Caco-2 (cell line): ENCODE measurements at regions of chr7 and their contacts with region 1.

Region 1: DNA sequence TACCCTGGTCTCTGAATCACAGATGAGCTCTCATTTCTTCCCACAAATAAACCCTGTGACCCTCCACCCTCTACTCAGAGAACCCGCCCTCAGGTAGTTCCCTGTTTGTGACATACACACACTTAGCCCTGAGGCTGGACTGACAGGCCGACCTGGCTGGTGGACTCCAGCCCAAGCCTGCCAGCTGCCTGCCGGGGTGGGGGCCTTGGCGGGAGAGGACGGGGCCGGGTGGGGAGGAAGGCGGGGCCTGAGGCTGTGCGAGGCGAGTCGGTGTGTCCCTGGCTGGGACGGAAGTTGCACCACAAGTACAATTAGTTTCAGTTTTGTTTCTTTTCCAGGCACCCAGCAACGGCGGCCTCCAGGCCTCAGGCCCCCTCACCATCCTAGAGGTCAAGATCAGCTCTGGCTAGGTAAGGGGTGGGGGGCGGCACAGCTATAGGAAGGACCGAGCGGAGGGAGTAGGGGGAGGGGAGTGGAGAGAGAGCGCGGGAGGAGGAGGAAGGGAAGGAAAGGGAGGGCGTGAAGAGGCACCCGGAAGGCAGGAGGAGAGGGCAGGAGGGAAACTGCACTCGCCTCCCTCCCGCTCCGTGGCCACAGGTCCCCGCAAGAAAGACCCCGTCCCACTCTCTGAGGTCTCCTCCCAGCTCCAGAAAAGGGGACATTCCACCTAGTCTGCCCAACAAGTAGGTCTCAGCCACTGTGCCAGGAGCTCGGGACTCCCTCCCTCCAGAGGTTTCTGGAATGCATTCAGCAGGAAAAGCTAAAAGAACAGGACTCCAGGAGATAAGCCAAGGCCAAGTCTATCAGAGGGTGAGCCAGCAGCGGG is at the start of gene TRIM56:
- DNase-seq: peak; percentile 95 to 96
- H3K4me3 ChIP-seq: peak within 1 kb of the TSS; percentile 82
- H3K4me3 Mint-ChIP-seq: peak within 1 kb of the TSS; percentile 85
- H3K27ac Mint-ChIP-seq: peak within 1 kb of the TSS; percentile 83
- H3K4me1 ChIP-seq: peaks cover 12% of the 10 kb centered on the region
- H3K4me1 Mint-ChIP-seq: peaks cover 16% of the 10 kb centered on the region
- H3K27me3 ChIP-seq: no peaks in the 10 kb centered on the region
- H3K27me3 Mint-ChIP-seq: no peaks in the 10 kb centered on the region
- CTCF ChIP-seq: no peak
- total RNA-seq, gene TRIM56: 30.3 and 33.4 TPM in 2 replicates

Region 2: DNA sequence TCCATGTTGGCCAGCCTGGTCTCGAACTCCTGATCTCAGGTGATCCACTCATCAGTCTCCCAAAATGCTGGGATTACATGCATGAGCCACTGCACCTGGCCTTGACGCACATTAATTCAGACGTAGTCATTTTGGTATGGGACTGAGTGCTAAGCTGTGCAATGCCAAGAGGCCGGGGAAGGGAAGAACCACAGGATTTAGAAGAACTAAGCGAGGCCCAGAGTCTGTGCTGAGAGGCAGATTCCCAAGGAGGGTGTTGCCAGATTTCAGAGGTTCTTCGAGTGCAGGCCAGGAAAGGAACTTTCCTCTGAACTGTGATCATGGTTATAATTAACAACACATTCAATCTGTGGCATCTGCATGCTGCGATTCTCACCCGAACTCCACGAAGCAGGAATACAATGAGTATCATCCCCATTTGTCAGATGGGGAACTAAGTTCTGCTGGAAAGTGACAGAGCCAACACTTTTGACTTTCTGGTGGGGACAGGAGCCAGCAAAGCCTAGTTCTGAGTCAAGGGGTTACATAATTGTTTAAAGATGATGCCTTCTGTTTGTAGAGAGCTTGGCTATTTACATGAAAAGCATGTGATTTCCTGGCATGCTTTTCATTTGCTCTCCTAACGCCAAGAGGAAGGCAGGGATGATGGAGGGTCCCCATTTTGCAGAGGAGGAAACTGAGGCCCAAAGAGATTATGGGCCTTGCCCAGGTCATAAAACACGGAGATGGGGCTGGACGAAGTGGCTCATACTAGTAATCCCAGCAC is 358.2 kb before region 1 on chr7:
- CTCF ChIA-PET with region 1: no interaction called
- POLR2A ChIA-PET with region 1: interaction called, 12 read pairs
- intact Hi-C with region 1: no loop called
- DNase-seq: no peak
- H3K4me3 ChIP-seq: no peak overlapping the region
- H3K4me3 Mint-ChIP-seq: no peak overlapping the region
- H3K27ac Mint-ChIP-seq: no peak overlapping the region
- H3K4me1 ChIP-seq: 0 out of 2 replicates have a peak, but pooled peaks cover 5% of the 10 kb centered on the region
- H3K4me1 Mint-ChIP-seq: peaks cover 5% of the 10 kb centered on the region
- H3K27me3 ChIP-seq: no peaks in the 10 kb centered on the region
- H3K27me3 Mint-ChIP-seq: no peaks in the 10 kb centered on the region
- CTCF ChIP-seq: no peak

Region 3: GRCh38 chr7:100874577-100875355 is 210.6 kb before region 1 on chr7 and contains the start of gene SRRT:
- CTCF ChIA-PET with region 1: no interaction called
- POLR2A ChIA-PET with region 1: interaction called, 10 read pairs
- intact Hi-C with region 1: no loop called
- DNase-seq: peak; percentile 98 to 99
- H3K4me3 ChIP-seq: peak within 1 kb of the TSS; percentile 81
- H3K4me3 Mint-ChIP-seq: peak within 1 kb of the TSS; percentile 85
- H3K27ac Mint-ChIP-seq: peak within 1 kb of the TSS; percentile 98
- H3K4me1 ChIP-seq: peaks cover 10% of the 10 kb centered on the region; the same call in 1 of the 2 replicates
- H3K4me1 Mint-ChIP-seq: peaks cover 14% of the 10 kb centered on the region
- H3K27me3 ChIP-seq: no peaks in the 10 kb centered on the region
- H3K27me3 Mint-ChIP-seq: no peaks in the 10 kb centered on the region
- CTCF ChIP-seq: peak; percentile 33 to 48
- total RNA-seq, gene SRRT: 211 and 243 TPM in 2 replicates

Region 4: GRCh38 chr7:100901921-100902332 is 183.4 kb before region 1 on chr7:
- CTCF ChIA-PET with region 1: no interaction called
- POLR2A ChIA-PET with region 1: no interaction called
- intact Hi-C with region 1: no loop called
- DNase-seq: peak; percentile 53 to 61
- H3K4me3 ChIP-seq: no peak overlapping the region
- H3K4me3 Mint-ChIP-seq: no peak overlapping the region
- H3K27ac Mint-ChIP-seq: no peak overlapping the region
- H3K4me1 ChIP-seq: peaks cover 30% of the 10 kb centered on the region
- H3K4me1 Mint-ChIP-seq: peaks cover 16% of the 10 kb centered on the region
- H3K27me3 ChIP-seq: no peaks in the 10 kb centered on the region
- H3K27me3 Mint-ChIP-seq: no peaks in the 10 kb centered on the region
- CTCF ChIP-seq: no peak

Region 5: GRCh38 chr7:101273206-101273605 is 187.8 kb after region 1 on chr7:
- CTCF ChIA-PET with region 1: no interaction called
- POLR2A ChIA-PET with region 1: no interaction called
- intact Hi-C with region 1: no loop called
- DNase-seq: no peak
- H3K4me3 ChIP-seq: no peak overlapping the region
- H3K4me3 Mint-ChIP-seq: no peak overlapping the region
- H3K27ac Mint-ChIP-seq: no peak overlapping the region
- H3K4me1 ChIP-seq: no peaks in the 10 kb centered on the region
- H3K4me1 Mint-ChIP-seq: no peaks in the 10 kb centered on the region
- H3K27me3 ChIP-seq: no peaks in the 10 kb centered on the region
- H3K27me3 Mint-ChIP-seq: no peaks in the 10 kb centered on the region
- CTCF ChIP-seq: no peak

Region 6: DNA sequence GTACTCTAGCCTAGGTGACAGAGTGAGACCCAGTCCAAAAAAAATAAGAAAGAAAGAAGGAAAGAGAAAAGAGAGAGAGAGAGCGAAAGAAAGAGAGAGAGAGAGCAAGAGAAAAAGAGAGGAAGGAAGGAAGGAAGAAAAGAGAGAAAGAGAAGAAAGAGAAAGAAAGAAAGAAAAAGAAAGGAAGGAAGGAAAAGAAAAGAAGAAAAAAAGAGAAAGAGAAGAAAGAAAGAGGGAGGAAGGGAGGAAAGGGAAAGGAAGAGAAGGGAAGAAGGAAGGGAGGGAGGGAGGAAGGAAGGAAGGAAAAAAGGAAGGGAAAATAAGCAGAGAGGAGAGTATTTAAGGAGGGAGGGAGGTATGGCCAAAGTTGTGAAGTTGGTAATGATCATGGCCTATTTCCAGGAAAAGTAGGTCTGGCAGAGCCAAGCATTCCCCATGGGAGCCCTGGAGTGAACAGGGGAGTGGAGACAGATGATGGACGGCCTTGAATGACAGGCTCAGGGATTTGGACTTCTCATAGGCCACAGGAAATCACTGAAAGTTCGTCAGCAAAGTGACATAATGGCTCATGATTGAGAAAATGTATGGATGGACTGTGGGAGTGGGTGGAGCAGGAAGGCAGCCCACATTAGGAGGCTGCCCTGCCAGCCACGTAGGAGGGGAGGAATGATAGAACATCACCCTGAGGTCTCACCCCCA is 687.3 kb after region 1 on chr7:
- CTCF ChIA-PET with region 1: no interaction called
- POLR2A ChIA-PET with region 1: no interaction called
- intact Hi-C with region 1: no loop called
- DNase-seq: no peak
- H3K4me3 ChIP-seq: no peak overlapping the region
- H3K4me3 Mint-ChIP-seq: no peak overlapping the region
- H3K27ac Mint-ChIP-seq: no peak overlapping the region
- H3K4me1 ChIP-seq: no peaks in the 10 kb centered on the region
- H3K4me1 Mint-ChIP-seq: no peaks in the 10 kb centered on the region
- H3K27me3 ChIP-seq: no peaks in the 10 kb centered on the region
- H3K27me3 Mint-ChIP-seq: peaks cover 8% of the 10 kb centered on the region
- CTCF ChIP-seq: no peak